Activated B cell treated with CpG ODN at 0.5 μM for 24 hours (primary cell): ENCODE measurements at regions of chr7 and their contacts with region 1.

Region 1: DNA sequence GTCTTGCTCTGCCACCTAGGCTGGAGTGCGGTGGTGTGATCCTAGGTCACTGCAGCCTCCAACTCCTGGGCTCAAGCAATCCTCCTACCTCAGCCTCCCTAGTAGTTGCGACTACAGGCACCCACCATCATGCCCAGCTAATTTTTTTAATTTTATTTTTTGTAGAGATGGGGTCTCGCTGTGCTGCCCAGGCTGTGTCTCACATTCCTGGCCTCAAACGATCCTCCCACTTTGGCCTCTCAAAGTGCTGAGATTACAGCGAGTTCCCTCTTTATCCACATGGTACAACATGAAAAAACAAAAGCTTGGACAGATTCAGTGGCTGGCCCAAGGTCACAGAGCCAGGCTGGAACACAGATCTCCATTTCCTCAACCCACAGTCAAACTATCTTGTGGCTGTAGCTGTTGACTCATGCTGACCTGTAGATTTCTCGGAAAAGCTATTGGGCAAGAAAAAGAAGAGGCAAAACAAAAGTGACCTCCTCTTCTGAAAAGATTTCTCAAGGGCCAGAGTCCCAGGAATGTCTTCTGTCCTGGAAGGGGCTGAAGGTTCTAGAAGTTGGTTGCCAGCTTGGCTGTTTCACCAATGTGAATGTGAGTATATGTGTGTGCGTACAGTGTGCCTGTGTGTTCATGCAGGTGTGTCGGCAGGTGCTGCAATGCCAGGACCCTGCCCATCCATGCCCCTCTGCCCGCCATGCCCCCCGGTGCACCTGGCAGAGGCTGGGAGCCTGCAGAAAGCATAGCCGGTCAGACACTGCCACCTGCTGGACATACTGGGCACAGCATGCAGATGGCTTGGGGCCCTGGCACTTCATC is 28.4 kb downstream of the TMEM130 start:
- DNase-seq: peak; percentile 72
- ATAC-seq: peak; percentile 87
- H3K4me3 Mint-ChIP-seq: no peak overlapping the region
- H3K27ac Mint-ChIP-seq: no peak overlapping the region
- H3K4me1 Mint-ChIP-seq: peaks cover 2% of the 10 kb centered on the region
- H3K27me3 Mint-ChIP-seq: peaks cover 5% of the 10 kb centered on the region
- CTCF ChIP-seq: peak; percentile 90

Region 2: DNA sequence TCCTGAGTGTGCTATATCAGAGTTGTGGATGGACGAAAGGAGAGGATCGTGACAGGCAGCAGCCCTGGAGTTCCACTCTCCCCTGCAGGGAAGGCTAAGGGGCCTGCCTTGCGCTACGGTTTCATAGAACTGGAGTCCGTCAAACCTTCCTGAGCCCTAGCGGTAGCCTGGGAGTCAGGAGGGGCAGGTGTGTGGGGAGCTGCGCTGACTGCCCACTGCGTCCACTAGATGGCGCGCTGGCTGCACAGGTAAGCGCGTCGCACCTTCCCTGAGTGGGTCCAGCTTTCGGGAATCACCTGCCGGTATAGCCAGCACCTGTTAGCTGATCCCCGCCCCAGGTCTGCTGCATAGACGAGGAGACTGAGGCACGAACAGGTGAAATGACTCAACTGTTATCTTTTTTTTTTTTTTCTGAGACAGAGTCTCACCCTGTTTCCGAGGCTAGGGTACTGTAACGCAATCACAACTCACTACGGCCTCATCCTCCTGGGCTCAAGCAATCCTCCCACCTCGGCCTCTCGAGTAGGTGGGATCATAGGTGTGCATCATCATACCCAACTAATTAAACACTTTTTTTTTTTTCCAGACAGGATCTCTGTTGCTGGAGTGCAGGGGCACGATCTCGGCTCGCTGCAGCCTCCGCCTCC is 420.3 kb before region 1 on chr7:
- CTCF ChIA-PET with region 1: interaction called, 12 read pairs
- POLR2A ChIA-PET with region 1: no interaction called
- intact Hi-C with region 1: no loop called
- DNase-seq: peak; percentile 43
- ATAC-seq: peak; percentile 86
- H3K4me3 Mint-ChIP-seq: no peak overlapping the region
- H3K27ac Mint-ChIP-seq: no peak overlapping the region
- H3K4me1 Mint-ChIP-seq: peaks cover 2% of the 10 kb centered on the region
- H3K27me3 Mint-ChIP-seq: peaks cover 30% of the 10 kb centered on the region
- CTCF ChIP-seq: no peak

Region 3: DNA sequence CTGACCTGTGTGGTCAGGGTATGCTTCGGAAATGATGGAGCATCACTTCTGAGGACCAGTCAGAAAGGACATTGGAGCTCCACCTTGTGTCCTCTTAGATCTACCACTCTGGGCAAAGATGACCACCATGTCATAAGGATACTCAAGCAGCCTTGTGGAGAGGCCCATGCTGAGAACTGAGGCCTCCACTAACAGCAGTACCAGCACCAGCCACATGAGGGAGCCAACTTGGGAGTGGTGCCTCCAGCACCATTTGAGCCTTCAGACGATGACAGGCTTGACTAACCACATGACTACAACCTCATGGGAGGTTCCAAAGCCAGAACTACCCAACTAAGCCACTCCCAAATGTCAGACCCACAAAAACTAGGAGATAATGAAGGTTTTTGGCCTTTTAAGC is 108.4 kb before region 1 on chr7:
- CTCF ChIA-PET with region 1: interaction called, 8 read pairs
- POLR2A ChIA-PET with region 1: no interaction called
- intact Hi-C with region 1: loop called (anchors 2 kb)
- DNase-seq: no peak
- ATAC-seq: peak; percentile 60
- H3K4me3 Mint-ChIP-seq: no peak overlapping the region
- H3K27ac Mint-ChIP-seq: no peak overlapping the region
- H3K4me1 Mint-ChIP-seq: no peaks in the 10 kb centered on the region
- H3K27me3 Mint-ChIP-seq: peaks cover 8% of the 10 kb centered on the region
- CTCF ChIP-seq: no peak

Region 4: GRCh38 chr7:98870121-98870651 is 28.8 kb after region 1 on chr7:
- CTCF ChIA-PET with region 1: interaction called, 5 read pairs
- POLR2A ChIA-PET with region 1: no interaction called
- intact Hi-C with region 1: loop called (anchors 1 kb)
- DNase-seq: peak; percentile 85
- ATAC-seq: peak; percentile 98
- H3K4me3 Mint-ChIP-seq: peak overlapping the region; percentile 85
- H3K27ac Mint-ChIP-seq: peak overlapping the region; percentile 63
- H3K4me1 Mint-ChIP-seq: peaks cover 20% of the 10 kb centered on the region
- H3K27me3 Mint-ChIP-seq: peaks cover 5% of the 10 kb centered on the region
- CTCF ChIP-seq: no peak

Region 5: DNA sequence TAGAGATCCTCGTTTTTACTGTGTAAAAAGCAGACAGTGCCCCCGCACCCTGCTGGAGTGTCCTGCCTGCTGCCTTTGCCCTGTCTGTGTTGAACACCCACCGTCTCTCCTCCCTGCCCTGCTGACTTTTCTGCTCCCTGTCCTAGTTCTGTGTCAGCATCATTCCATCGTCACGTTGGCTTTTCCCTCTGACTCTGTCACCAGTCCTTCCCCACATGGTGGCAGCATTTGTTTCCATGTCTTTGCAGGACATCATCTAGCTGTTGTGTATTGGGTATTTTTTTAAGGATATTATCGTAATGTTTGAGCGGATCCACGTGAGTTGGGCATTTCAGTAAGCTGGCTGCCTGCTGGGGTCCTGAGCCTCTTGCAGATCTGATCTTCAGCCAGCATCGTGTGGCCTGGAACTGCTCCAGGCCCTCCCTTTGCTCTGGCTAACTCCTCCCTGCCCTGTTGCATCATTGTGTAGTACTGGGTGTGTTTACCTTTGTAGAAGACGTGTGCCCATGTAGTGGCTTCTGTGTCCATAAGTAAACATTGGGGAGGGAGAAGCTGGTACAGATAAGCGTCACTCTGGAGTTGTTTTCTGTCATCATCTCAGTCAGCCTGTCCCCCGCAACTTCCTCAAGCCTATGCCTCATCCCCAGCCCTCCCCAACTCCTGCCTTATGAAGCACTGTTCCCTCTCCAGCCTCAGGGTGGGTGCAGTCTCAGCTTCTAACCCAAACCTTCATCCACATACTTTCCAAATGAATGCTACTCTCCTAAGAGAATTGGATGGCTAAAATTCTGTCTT is 81.2 kb after region 1 on chr7:
- CTCF ChIA-PET with region 1: no interaction called
- POLR2A ChIA-PET with region 1: no interaction called
- intact Hi-C with region 1: no loop called
- DNase-seq: no peak
- ATAC-seq: no peak
- H3K4me3 Mint-ChIP-seq: no peak overlapping the region
- H3K27ac Mint-ChIP-seq: no peak overlapping the region
- H3K4me1 Mint-ChIP-seq: no peaks in the 10 kb centered on the region
- H3K27me3 Mint-ChIP-seq: no peaks in the 10 kb centered on the region
- CTCF ChIP-seq: no peak